Activated CD4-positive, alpha-beta memory T cell treated with anti-CD3 and anti-CD28 coated beads for 36 hours (primary cell): ENCODE measurements at regions of chrX and their contacts with region 1.

Region 1: DNA sequence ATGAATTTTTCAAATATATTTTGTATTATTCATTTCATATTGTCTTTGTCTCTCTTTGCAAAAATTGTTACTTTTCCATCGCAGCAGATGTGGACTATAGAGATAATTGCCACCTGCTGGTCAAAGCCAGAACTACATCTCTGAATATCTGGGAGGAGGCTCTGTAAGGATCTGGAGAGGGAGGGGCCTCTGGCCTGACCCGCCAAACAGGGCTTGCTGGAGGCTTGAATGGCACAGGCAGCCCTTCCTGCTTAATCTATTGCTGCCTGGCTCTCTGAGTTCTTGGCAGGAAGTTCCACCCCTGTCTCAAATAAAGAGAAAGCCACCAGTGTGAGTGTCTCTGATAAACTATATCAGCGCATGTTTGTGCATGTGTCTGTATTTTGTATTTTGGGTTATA is 132.4 kb downstream of the ZMAT1 start:
- DNase-seq: peak; percentile 79
- H3K4me3 Mint-ChIP-seq: peak overlapping the region; percentile 57
- H3K27ac Mint-ChIP-seq: no peak overlapping the region
- H3K4me1 Mint-ChIP-seq: no peaks in the 10 kb centered on the region
- H3K27me3 Mint-ChIP-seq: no peaks in the 10 kb centered on the region

Region 2: DNA sequence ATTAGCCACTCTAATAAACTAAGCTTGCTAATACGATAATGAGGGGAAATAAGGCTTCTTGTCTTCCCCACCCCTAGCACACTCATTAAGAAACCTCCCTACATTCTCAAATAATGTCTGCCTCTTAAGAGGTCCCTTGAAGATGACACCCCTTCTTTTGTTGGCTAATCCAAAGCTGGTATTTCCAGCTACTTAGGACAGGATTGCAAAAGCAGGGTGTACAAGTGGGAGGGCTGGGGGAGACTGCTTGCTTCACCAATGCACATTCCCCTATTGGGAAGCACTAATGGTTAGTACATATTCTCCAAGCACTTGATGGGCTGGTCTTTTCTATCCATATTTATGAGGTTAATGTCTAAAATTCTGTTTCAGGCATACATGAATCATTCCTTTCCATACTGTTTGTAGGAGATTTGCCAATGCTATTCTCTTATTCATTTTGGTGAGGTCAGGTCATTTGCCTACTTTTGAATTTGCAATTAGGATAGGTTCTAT is 434.0 kb before region 1 on chrX:
- CTCF ChIA-PET with region 1: no interaction called
- POLR2A ChIA-PET with region 1: no interaction called
- intact Hi-C with region 1: no loop called
- DNase-seq: no peak
- H3K4me3 Mint-ChIP-seq: no peak overlapping the region
- H3K27ac Mint-ChIP-seq: no peak overlapping the region
- H3K4me1 Mint-ChIP-seq: no peaks in the 10 kb centered on the region
- H3K27me3 Mint-ChIP-seq: no peaks in the 10 kb centered on the region

Region 3: DNA sequence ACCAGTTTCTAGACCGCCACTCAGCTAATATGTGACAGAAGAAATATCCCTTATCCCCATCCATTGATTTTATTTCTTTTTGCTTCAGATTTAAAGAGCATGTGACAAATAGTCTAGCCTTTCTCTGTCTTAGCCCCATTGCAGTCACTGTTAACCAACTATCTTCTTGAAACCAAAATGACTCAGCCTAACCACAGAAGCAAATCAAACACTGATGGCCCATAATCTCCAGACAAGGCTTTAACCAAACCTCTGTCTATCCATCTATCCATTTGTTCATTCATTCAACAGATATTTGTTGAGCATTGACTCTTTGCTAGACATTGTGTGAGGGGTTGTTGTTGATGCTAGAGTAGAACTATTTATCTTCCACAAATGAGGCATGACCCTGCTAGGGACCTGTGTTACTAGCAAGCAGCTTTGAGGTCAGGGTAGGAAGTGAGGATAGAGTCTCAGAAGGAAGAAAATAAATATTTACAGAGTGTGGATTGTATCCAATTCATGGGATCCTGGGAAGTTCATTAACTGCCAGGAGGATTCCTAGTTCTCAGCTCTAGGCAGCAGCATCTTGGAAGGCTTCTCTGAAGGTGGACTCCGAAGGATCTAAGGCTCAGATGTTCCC is 368.8 kb before region 1 on chrX:
- CTCF ChIA-PET with region 1: no interaction called
- POLR2A ChIA-PET with region 1: no interaction called
- intact Hi-C with region 1: loop called (anchors 5 kb)
- DNase-seq: no peak
- H3K4me3 Mint-ChIP-seq: no peak overlapping the region
- H3K27ac Mint-ChIP-seq: peak overlapping the region; percentile 78
- H3K4me1 Mint-ChIP-seq: peaks cover 13% of the 10 kb centered on the region
- H3K27me3 Mint-ChIP-seq: no peaks in the 10 kb centered on the region

Region 4: DNA sequence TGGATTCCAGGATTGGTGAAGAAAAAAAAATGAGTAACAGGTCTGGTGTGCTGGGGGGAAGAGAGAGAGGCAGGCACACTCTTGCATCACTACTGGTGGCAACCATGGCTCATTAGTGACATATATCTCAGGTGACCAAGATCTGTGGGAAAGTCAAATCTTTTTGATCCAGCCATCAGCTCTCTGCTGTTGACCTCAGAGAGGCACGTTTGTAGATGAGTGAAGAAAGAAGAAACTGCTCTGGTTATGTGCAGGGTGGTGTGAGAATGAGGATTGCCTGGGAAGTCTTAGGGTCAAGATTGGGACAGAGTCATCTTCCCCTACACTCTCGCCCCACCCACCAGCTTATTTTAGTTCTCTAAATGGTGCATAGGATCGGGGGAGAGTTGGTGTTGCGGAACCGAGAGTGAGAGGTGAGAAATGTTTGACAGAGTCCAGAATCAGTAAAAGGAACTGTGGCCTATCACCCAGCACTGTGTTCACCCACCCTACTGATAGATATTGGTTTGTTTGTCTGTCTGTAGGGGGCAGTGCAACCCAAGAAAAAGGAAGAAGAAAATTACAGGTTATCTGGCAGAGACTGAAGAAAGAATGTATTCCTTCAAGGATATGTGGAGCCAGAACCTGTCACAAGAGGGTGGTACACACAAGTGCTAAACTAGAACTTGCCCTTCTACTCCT is 203.5 kb before region 1 on chrX:
- CTCF ChIA-PET with region 1: interaction called, 4 read pairs
- POLR2A ChIA-PET with region 1: no interaction called
- intact Hi-C with region 1: loop called (anchors 5 kb)
- DNase-seq: no peak
- H3K4me3 Mint-ChIP-seq: no peak overlapping the region
- H3K27ac Mint-ChIP-seq: no peak overlapping the region
- H3K4me1 Mint-ChIP-seq: no peaks in the 10 kb centered on the region
- H3K27me3 Mint-ChIP-seq: peaks cover 6% of the 10 kb centered on the region

Region 5: GRCh38 chrX:101617211-101618191 is 181.9 kb before region 1 on chrX and contains the start of gene ARMCX6:
- CTCF ChIA-PET with region 1: no interaction called
- POLR2A ChIA-PET with region 1: no interaction called
- intact Hi-C with region 1: loop called (anchors 5 kb)
- DNase-seq: peak; percentile 81
- H3K4me3 Mint-ChIP-seq: peak within 1 kb of the TSS; percentile 90
- H3K27ac Mint-ChIP-seq: peak within 1 kb of the TSS; percentile 84
- H3K4me1 Mint-ChIP-seq: peaks cover 43% of the 10 kb centered on the region
- H3K27me3 Mint-ChIP-seq: no peaks in the 10 kb centered on the region
- total RNA-seq, gene ARMCX6: 45.2 to 47.3 TPM

Region 6: DNA sequence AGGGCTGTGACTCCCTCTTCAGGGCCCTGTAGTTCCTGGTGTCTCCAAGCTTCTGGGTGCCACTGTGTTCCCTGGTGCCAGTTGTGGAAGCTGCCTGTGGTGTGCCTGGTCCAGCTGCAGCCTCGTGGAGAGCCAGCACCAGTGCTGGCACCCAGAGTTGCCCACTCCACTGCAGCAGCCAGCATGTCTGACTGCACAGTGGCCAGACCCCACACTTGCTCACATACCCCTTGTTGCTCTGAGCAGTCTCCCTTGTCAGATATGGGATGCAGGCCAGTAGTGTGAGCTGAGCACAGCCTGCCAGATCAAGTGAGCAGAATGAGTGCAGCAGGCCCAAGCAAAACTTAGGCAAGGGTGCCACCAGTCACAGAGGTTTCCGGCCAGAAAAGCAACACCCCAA is 23.8 kb after region 1 on chrX:
- CTCF ChIA-PET with region 1: no interaction called
- POLR2A ChIA-PET with region 1: no interaction called
- intact Hi-C with region 1: no loop called
- DNase-seq: no peak
- H3K4me3 Mint-ChIP-seq: no peak overlapping the region
- H3K27ac Mint-ChIP-seq: no peak overlapping the region
- H3K4me1 Mint-ChIP-seq: no peaks in the 10 kb centered on the region
- H3K27me3 Mint-ChIP-seq: peaks cover 7% of the 10 kb centered on the region

Region 7: GRCh38 chrX:101986586-101986985 is 187.2 kb after region 1 on chrX:
- CTCF ChIA-PET with region 1: no interaction called
- POLR2A ChIA-PET with region 1: no interaction called
- intact Hi-C with region 1: no loop called
- DNase-seq: no peak
- H3K4me3 Mint-ChIP-seq: no peak overlapping the region
- H3K27ac Mint-ChIP-seq: no peak overlapping the region
- H3K4me1 Mint-ChIP-seq: no peaks in the 10 kb centered on the region
- H3K27me3 Mint-ChIP-seq: no peaks in the 10 kb centered on the region